Adrenal gland (tissue), 19 donors: ENCODE measurements at regions of chr1 and their contacts with region 1.

Region 1: DNA sequence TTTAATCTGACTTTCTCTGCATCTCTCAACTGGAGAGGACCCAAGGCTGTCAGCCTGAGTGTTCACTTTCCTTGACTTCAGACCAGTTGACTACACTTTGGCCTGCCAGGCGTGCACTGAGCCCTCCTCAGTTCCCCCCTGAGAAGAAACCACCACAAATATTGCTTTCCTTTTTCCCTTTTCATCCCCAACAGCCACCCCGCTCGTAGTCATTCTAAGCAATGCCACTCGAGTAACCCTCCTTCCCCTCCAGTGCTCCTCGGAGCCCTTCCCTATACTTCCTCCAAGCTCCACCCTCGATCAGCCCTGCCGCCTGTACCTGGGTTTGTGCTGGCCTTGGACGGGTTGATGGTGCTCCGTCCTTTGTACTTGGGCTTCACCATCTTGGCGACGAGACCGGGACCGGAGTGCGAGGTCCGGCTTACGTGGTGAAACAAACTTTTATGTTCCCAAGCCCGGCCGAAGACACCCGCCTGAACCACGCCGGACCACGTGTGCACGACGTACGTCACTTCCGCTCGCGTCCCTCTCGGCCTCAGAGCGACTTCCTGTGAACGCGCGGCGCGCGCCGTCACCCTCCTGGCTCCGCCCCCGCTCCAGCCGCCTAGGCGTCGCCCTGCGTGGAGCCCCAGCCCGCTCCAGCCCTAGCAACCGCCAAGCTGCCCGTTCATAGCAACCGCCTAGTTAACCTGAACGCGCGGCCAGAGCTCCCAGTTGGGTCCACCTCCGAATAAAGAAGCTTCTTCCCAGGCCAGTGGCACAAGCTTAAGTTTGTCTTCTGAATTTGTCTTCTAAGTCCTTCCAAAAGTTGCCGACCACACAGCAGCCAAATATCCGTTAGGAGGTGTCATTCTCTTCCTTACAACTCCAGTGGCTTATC is at the start of gene GNL2:
- DNase-seq: peak; percentile 96 to 99 (median 97)
- H3K4me3 ChIP-seq: peak within 1 kb of the TSS; percentile 47 to 87 (median 74)
- H3K27ac ChIP-seq: peak within 1 kb of the TSS in 4 of 5 donors; percentile 68 to 92 (median 76)
- H3K4me1 ChIP-seq: peaks cover 6 to 24% of the 10 kb centered on the region in 2 donors
- H3K27me3 ChIP-seq: no peaks in the 10 kb centered on the region
- CTCF ChIP-seq: peak in 1 of 6 experiments; percentile 5
- POLR2A ChIP-seq: peak; percentile 45 to 77
- total RNA-seq, gene GNL2: 13.6 to 84.7 (median 26.4) TPM

Region 2: DNA sequence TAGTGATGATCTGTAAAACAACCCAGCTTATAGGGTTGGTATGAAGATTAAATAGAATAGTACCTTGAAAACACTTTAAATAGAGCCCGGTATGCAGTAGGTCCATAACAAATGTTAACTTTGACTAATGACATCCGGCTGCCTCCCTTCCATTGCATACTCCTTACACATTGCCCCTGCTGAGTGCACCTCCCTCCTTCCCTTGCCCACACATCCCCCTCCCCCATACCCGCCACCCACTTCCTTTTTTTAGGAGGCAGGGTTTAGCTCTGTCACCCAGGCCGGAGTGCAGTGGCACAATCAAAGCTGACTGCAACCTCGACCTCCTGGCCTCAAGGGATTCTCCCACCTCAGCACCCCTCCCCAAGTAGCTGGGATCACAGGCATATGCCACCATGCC is 145.7 kb before region 1 on chr1:
- intact Hi-C with region 1: no loop called
- DNase-seq: no peak
- H3K4me3 ChIP-seq: no peak overlapping the region
- H3K27ac ChIP-seq: no peak overlapping the region
- H3K4me1 ChIP-seq: peaks cover 0 to 4% of the 10 kb centered on the region in 2 donors
- H3K27me3 ChIP-seq: no peaks in the 10 kb centered on the region
- CTCF ChIP-seq: no peak
- POLR2A ChIP-seq: no peak

Region 3: DNA sequence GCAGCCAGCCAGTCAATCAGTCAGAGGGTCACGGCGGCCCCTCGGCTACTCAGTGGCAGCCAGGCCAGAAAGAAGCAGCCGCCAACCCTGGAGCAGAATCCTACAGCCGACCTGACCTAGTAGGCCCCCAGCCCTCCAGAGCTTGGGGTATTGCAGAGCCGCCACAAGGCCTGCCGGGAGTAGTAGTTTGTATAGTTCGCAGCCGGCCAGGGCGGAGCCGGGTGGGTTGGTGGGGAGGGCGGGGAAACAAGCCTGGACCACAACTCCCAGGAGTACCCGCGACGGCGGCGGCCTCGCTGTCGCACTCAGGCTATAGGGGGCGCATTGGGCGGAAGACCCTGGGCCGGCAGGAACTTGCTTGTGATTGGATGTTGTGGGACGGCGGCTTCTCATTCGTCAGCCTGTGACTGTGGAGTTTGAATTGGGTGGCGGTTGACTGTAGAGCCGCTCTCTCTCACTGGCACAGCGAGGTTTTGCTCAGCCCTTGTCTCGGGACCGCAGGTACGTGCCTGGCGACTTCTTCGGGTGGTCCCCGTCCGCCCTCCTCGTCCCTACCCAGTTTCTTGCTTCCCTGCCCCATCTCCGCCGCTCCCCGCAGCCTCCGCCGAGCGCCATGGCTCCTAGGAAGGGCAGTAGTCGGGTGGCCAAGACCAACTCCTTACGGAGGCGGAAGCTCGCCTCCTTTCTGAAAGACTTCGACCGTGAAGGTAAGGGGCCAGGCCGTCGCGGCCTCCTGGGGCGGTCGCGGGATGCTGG is 96.6 kb after region 1 on chr1 and contains the start of gene CDCA8:
- intact Hi-C with region 1: no loop called
- DNase-seq: peak; percentile 98 to 99 (median 98)
- H3K4me3 ChIP-seq: peak within 1 kb of the TSS; percentile 83 to 95 (median 88)
- H3K27ac ChIP-seq: peak within 1 kb of the TSS; percentile 64 to 89 (median 75)
- H3K4me1 ChIP-seq: peaks cover 26 to 29% of the 10 kb centered on the region in 2 donors
- H3K27me3 ChIP-seq: no peaks in the 10 kb centered on the region
- CTCF ChIP-seq: peak; percentile 10 to 48 (median 42)
- POLR2A ChIP-seq: peak in 1 of 2 donors; percentile 78
- total RNA-seq, gene CDCA8: 0.49 to 3.2 (median 1.3) TPM

Region 4: DNA sequence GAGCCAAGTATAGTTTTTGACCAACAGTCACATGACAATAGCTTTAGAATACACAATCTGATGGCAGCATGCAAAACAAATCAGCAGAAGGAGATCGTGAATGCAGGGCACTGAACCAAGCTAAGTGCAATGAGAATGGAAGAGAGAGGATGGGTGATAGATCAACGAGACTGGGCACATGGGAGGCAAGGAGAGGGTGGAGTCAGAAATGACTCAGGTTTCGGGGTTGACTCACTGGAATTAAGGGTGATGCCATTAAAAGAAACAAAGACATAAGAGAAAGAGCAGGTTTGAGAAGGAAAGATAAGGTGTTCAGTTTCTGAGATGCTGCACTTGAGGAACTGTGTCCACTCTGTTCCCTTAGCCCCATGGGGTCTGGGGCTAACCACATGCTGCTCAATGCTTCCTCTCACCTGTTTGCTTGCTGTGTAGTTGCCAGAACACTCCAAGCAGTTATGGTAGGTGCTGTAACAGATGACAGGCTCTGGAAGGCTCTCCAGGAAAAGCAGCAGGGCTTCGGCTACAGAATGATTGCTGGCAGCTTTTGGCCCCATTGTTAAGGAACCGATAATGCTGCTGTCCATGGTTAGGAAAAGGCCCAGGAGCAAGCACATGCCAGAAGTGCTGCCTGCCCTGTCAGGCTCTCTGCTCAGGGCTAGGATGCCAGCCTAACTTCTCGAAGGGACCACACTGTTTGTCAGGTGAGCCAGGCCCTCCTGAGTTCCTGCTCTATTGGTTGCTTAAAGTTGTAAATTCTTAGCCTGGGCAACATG is 269.9 kb after region 1 on chr1:
- intact Hi-C with region 1: loop called in 1 of 2 experiments (anchors 5 kb)
- DNase-seq: no peak
- H3K4me3 ChIP-seq: no peak overlapping the region
- H3K27ac ChIP-seq: peak overlapping the region in 1 of 5 donors; percentile 13
- H3K4me1 ChIP-seq: peaks cover 0 to under 1% of the 10 kb centered on the region in 2 donors
- H3K27me3 ChIP-seq: no peaks in the 10 kb centered on the region
- CTCF ChIP-seq: no peak
- POLR2A ChIP-seq: no peak